ENCODE measurements at regions of chr9 and their contacts with region 1.

Region 1: GRCh38 chr9:68643901-68644809 is 60.9 kb upstream of the PIP5K1B start:
- DNase-seq: peak; percentile 63
- ATAC-seq: peak; percentile 83
- H3K4me3 ChIP-seq: peak overlapping the region; percentile 36; the same call in 1 of the 2 replicates
- H3K27ac ChIP-seq: peak overlapping the region; percentile 76
- H3K4me1 ChIP-seq: peaks cover 49% of the 10 kb centered on the region
- H3K27me3 ChIP-seq: no peaks in the 10 kb centered on the region
- CTCF ChIP-seq: no peak
- EP300 ChIP-seq: 0 out of 4 replicates have a peak, but pooled peaks have one; percentile 18 to 46
- POLR2A ChIP-seq: no peak
- RAD21 ChIP-seq: no peak

Region 2: DNA sequence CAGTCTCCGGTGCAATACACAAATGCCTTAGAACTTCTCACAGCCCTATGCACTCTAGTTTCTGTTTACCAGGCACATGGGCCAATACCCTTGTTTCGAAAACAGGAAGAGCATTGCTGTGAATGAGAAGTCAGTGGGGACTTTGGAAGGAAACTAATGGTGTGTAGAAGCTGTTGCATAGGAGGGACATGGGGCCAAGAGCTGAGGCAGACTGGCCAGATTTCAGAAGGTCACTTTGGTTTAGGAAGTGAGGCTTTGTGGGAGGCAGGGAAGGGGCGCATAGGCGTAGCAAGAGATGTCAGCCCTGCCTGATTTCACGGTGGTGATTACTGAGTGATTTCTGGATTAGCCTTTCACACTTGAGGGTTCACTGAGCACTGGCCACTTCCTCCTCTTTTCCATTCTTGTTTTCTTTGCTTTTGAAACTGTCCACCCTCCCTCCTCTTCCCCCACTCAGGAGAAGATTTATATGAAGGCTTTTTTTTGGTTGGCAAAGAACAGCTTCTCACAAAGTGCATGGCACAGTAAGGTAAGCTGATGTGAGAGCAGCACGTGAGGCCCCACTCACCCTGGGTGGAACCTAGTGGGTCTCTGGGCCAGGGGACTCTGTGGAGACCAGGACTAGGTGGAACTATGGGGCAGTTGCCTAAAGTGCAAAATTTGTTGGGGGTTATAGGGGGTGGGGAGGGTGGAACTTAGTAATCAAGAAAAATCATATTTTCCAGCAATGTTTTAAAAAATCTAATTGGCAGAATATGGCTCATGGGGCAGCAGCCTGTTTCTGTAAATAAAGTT is 97.4 kb before region 1 on chr9:
- CTCF ChIA-PET with region 1: no interaction called
- POLR2A ChIA-PET with region 1: no interaction called
- RAD21 ChIA-PET with region 1: no interaction called
- SMC1A ChIA-PET with region 1: no interaction called
- in situ Hi-C with region 1: loop called (anchors 25 kb)
- intact Hi-C with region 1: no loop called
- DNase-seq: peak; percentile 86
- ATAC-seq: peak; percentile 93
- H3K4me3 ChIP-seq: peak overlapping the region; percentile 3; the same call in 1 of the 2 replicates
- H3K27ac ChIP-seq: peak overlapping the region; percentile 88
- H3K4me1 ChIP-seq: peaks cover 29% of the 10 kb centered on the region
- H3K27me3 ChIP-seq: no peaks in the 10 kb centered on the region; a peak in 2 of 4 replicates
- CTCF ChIP-seq: no peak
- EP300 ChIP-seq: peak; percentile 66 to 73
- POLR2A ChIP-seq: no peak
- RAD21 ChIP-seq: no peak

Region 3: DNA sequence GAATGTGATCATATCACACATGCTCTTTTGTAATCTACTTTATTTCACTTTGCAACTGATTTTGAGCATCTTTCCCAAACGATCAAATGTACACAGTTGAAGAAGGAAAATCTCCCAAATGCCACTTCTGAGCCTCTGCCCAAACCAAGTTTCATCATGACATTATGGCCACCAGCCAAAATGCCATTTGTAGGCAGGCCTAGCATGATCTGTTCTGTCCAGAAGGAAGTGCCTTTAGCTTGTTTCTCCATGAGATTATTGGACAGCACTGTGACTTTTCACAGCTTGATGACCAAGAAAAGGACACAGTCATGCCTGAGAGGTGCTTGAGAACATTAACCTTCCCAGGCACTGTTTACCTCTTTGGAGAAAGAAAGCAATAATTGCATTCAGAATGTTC is 12.3 kb before region 1 on chr9:
- CTCF ChIA-PET with region 1: interaction called, 3 read pairs
- POLR2A ChIA-PET with region 1: interaction called, 4 read pairs
- RAD21 ChIA-PET with region 1: interaction called, 3 read pairs
- SMC1A ChIA-PET with region 1: interaction called, 11 read pairs
- in situ Hi-C with region 1: no loop called
- intact Hi-C with region 1: no loop called
- DNase-seq: no peak
- ATAC-seq: no peak
- H3K4me3 ChIP-seq: no peak overlapping the region
- H3K27ac ChIP-seq: no peak overlapping the region
- H3K4me1 ChIP-seq: no peaks in the 10 kb centered on the region
- H3K27me3 ChIP-seq: no peaks in the 10 kb centered on the region; a peak in 1 of 4 replicates
- CTCF ChIP-seq: no peak
- EP300 ChIP-seq: no peak
- POLR2A ChIP-seq: no peak
- RAD21 ChIP-seq: no peak

Region 4: GRCh38 chr9:68981789-68982188 is 337.6 kb after region 1 on chr9:
- CTCF ChIA-PET with region 1: no interaction called
- POLR2A ChIA-PET with region 1: no interaction called
- RAD21 ChIA-PET with region 1: interaction called, 4 read pairs
- SMC1A ChIA-PET with region 1: no interaction called
- in situ Hi-C with region 1: no loop called
- intact Hi-C with region 1: loop called (anchors 5 kb)
- DNase-seq: peak; percentile 83
- ATAC-seq: peak; percentile 74
- H3K4me3 ChIP-seq: peak overlapping the region; percentile 33; the same call in 1 of the 2 replicates
- H3K27ac ChIP-seq: peak overlapping the region; percentile 70
- H3K4me1 ChIP-seq: peaks cover 61% of the 10 kb centered on the region
- H3K27me3 ChIP-seq: no peaks in the 10 kb centered on the region
- CTCF ChIP-seq: no peak
- EP300 ChIP-seq: peak; percentile 50 to 70; a peak in 2 of 4 replicates
- POLR2A ChIP-seq: no peak
- RAD21 ChIP-seq: no peak

Measured in GM12878 (cell line).